Activated B cell treated with CpG ODN at 0.5 μM for 24 hours (primary cell): ENCODE measurements at regions of chr14 and their contacts with region 1.

Region 1: GRCh38 chr14:25132732-25133422 is 82.9 kb upstream of the STXBP6 start:
- DNase-seq: peak; percentile 39
- ATAC-seq: peak; percentile 86
- H3K4me3 Mint-ChIP-seq: no peak overlapping the region
- H3K27ac Mint-ChIP-seq: no peak overlapping the region
- H3K4me1 Mint-ChIP-seq: no peaks in the 10 kb centered on the region
- H3K27me3 Mint-ChIP-seq: peaks cover 34% of the 10 kb centered on the region
- CTCF ChIP-seq: no peak

Region 2: GRCh38 chr14:24481622-24482324 is 651.1 kb before region 1 on chr14:
- CTCF ChIA-PET with region 1: interaction called, 3 read pairs
- POLR2A ChIA-PET with region 1: no interaction called
- intact Hi-C with region 1: loop called (anchors 2 kb)
- DNase-seq: peak; percentile 27
- ATAC-seq: peak; percentile 77
- H3K4me3 Mint-ChIP-seq: peak overlapping the region; percentile 83
- H3K27ac Mint-ChIP-seq: peak overlapping the region; percentile 41
- H3K4me1 Mint-ChIP-seq: peaks cover 20% of the 10 kb centered on the region
- H3K27me3 Mint-ChIP-seq: no peaks in the 10 kb centered on the region
- CTCF ChIP-seq: no peak

Region 3: DNA sequence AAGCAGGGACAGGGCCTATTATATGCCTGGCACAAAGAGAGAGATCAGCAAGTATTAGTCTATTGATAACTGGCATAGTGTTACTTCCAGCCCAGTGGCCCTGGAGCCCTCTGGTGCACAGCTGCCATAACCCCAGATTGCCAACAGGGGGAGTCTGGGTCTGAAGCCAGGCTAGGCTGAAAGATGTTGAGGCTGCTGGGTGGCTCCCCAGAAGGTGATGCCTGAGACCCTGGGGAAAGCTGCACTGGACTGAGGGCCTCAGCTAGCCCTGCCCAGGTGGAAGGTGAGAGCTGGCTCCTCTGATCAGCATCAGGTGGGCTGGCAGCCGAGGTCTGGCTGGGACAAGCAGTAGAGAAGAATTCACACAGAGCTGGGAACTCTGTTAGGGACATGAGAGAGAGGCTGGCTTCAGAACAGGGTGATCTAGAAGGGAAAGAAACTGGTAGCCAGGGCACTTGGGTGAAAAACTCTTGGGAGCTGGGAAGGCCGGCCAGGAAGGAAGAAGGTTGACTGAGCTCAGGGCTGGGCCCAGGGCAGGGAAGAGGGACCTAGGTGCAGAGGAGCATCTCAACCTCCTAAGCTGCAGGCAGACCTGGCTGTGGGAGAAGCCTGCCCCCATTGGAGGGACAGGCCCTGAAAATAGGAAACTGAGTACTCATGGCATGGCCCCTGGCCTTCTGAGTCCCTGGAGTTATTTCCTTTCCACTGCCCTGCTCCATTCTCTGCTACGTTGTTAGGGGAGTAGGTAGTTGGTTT is 527.3 kb before region 1 on chr14:
- CTCF ChIA-PET with region 1: interaction called, 3 read pairs
- POLR2A ChIA-PET with region 1: no interaction called
- intact Hi-C with region 1: loop called (anchors 1 kb)
- DNase-seq: peak; percentile 48
- ATAC-seq: peak; percentile 95
- H3K4me3 Mint-ChIP-seq: no peak overlapping the region
- H3K27ac Mint-ChIP-seq: no peak overlapping the region
- H3K4me1 Mint-ChIP-seq: peaks cover 34% of the 10 kb centered on the region
- H3K27me3 Mint-ChIP-seq: peaks cover 2% of the 10 kb centered on the region
- CTCF ChIP-seq: peak; percentile 94

Region 4: GRCh38 chr14:24690492-24690891 is 442.4 kb before region 1 on chr14:
- CTCF ChIA-PET with region 1: interaction called, 7 read pairs
- POLR2A ChIA-PET with region 1: no interaction called
- intact Hi-C with region 1: loop called (anchors 1 kb)
- DNase-seq: no peak
- ATAC-seq: peak; percentile 49
- H3K4me3 Mint-ChIP-seq: no peak overlapping the region
- H3K27ac Mint-ChIP-seq: no peak overlapping the region
- H3K4me1 Mint-ChIP-seq: peaks cover 8% of the 10 kb centered on the region
- H3K27me3 Mint-ChIP-seq: peaks cover 2% of the 10 kb centered on the region
- CTCF ChIP-seq: no peak

Region 5: GRCh38 chr14:24710403-24711112 is 422.3 kb before region 1 on chr14:
- CTCF ChIA-PET with region 1: interaction called, 69 read pairs
- POLR2A ChIA-PET with region 1: no interaction called
- intact Hi-C with region 1: loop called (anchors 1 kb)
- DNase-seq: no peak
- ATAC-seq: no peak
- H3K4me3 Mint-ChIP-seq: no peak overlapping the region
- H3K27ac Mint-ChIP-seq: no peak overlapping the region
- H3K4me1 Mint-ChIP-seq: peaks cover 31% of the 10 kb centered on the region
- H3K27me3 Mint-ChIP-seq: peaks cover 3% of the 10 kb centered on the region
- CTCF ChIP-seq: peak; percentile 33

Region 6: GRCh38 chr14:24734878-24735500 is 397.9 kb before region 1 on chr14:
- CTCF ChIA-PET with region 1: no interaction called
- POLR2A ChIA-PET with region 1: no interaction called
- intact Hi-C with region 1: loop called (anchors 1 kb)
- DNase-seq: no peak
- ATAC-seq: no peak
- H3K4me3 Mint-ChIP-seq: no peak overlapping the region
- H3K27ac Mint-ChIP-seq: no peak overlapping the region
- H3K4me1 Mint-ChIP-seq: no peaks in the 10 kb centered on the region
- H3K27me3 Mint-ChIP-seq: peaks cover 16% of the 10 kb centered on the region
- CTCF ChIP-seq: no peak

Region 7: DNA sequence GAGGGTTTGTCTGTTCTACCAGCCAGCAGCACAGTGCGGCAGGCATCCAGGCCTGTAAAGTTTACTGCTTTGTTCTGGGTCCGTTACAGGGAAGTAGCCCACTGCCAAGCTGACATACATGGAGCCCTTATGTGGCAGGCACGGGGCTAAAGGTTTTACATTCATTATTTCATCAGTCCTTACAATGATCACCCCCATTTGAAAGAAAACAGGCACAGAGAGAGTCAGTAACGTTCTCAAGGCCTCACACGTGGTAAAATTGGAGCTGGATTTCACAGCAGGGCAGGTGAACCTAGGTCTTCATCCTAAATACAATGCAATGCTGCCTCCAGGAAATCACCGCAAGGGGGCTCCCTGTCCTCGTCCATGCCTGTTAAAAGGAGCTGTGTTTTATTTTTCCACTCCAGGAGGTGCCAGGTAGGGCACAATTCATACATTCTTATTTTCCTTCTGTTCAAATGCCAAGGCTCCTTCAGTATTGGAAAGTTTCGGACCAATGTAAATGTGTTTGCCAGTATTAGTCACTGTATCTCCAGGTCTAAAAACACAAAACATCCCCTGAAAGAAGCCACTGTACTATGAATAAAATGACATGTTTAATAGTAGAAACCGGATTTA is 326.7 kb before region 1 on chr14:
- CTCF ChIA-PET with region 1: interaction called, 6 read pairs
- POLR2A ChIA-PET with region 1: no interaction called
- intact Hi-C with region 1: loop called (anchors 2 kb)
- DNase-seq: no peak
- ATAC-seq: no peak
- H3K4me3 Mint-ChIP-seq: no peak overlapping the region
- H3K27ac Mint-ChIP-seq: no peak overlapping the region
- H3K4me1 Mint-ChIP-seq: no peaks in the 10 kb centered on the region
- H3K27me3 Mint-ChIP-seq: peaks cover 3% of the 10 kb centered on the region
- CTCF ChIP-seq: no peak